ENCODE measurements at regions of chr1 and their contacts with region 1.

Region 1: DNA sequence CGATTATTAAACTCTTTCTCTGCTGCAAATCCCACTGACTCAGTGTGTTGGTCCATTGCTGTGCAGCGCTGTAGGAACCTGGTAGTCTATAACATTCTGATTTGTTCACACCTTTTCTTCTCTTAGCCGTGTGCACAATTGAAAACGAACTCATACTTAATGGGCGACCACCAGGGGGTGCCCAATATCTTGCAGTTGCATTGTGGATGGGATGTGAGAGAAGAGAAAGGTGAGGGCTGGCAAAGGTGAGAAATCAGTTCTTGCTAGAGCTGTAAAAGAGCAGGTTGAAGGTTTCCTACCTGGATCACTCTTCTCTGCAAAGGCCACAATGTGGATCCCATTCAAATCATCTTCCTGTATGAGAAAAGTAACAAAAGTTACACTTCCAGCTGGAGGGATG is 51.0 kb downstream of the CASQ2 start:
- DNase-seq: peak in 1 of 2 donors; percentile 59
- ATAC-seq: peak; percentile 36

Region 2: GRCh38 chr1:115764541-115764940 is 47.0 kb after region 1 on chr1:
- intact Hi-C with region 1: loop called in 1 of 2 experiments (anchors 5 kb)
- DNase-seq: peak in 1 of 2 donors; percentile 39
- ATAC-seq: peak; percentile 66

Region 3: GRCh38 chr1:115811140-115811828 is 93.7 kb after region 1 on chr1:
- intact Hi-C with region 1: no loop called
- DNase-seq: peak; percentile 76 to 83
- ATAC-seq: peak; percentile 92

Measured in left colon (tissue), 2 donors.